Transverse colon (tissue), 4 donors: ENCODE measurements at regions of chr1 and their contacts with region 1.

Region 1: DNA sequence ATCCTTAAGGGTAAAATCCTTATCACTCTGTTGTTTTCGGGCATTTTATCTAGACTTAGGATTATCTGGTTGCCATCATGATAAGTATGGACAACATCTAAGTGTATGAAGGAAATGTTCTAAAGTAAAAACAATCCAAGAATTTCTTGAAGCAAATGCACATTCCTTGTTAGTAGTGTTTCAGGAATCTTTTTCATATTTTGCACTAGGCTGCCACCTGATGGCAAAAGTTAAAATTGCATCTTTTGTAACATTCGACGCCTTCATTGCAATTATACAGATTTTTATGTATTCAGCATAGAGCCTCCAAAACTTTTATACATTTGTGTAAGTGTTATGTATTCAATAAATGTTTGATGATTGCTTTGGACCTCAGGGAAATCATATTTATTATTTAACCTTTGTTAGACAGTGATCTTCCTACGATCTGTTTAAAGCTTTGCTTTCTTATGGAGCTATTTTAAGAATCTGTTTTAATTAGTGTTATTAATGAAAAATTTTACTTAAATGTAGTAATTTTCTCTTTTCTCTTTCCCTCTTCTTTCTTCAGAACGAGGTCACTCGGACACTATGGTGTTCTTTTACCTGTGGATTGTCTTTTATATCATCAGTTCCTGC is 49.4 kb upstream of the KIAA1614 start:
- DNase-seq: peak; percentile 11
- H3K4me3 ChIP-seq: no peak overlapping the region
- H3K27ac ChIP-seq: no peak overlapping the region
- H3K4me1 ChIP-seq: no peaks in the 10 kb centered on the region
- H3K27me3 ChIP-seq: no peaks in the 10 kb centered on the region
- CTCF ChIP-seq: peak; percentile 62 to 78 (median 73)
- EP300 ChIP-seq: no peak
- POLR2A ChIP-seq: no peak

Region 2: GRCh38 chr1:180533266-180533987 is 329.8 kb before region 1 on chr1:
- in situ Hi-C with region 1: loop called in 2 of 4 experiments (anchors 5 to 10 kb)
- intact Hi-C with region 1: loop called (anchors 5 kb)
- DNase-seq: peak; percentile 75
- H3K4me3 ChIP-seq: no peak overlapping the region
- H3K27ac ChIP-seq: no peak overlapping the region
- H3K4me1 ChIP-seq: peaks cover 0 to 3% (median 0%) of the 10 kb centered on the region in 4 donors
- H3K27me3 ChIP-seq: no peaks in the 10 kb centered on the region
- CTCF ChIP-seq: peak; percentile 79 to 89 (median 85)
- EP300 ChIP-seq: no peak
- POLR2A ChIP-seq: no peak

Region 3: DNA sequence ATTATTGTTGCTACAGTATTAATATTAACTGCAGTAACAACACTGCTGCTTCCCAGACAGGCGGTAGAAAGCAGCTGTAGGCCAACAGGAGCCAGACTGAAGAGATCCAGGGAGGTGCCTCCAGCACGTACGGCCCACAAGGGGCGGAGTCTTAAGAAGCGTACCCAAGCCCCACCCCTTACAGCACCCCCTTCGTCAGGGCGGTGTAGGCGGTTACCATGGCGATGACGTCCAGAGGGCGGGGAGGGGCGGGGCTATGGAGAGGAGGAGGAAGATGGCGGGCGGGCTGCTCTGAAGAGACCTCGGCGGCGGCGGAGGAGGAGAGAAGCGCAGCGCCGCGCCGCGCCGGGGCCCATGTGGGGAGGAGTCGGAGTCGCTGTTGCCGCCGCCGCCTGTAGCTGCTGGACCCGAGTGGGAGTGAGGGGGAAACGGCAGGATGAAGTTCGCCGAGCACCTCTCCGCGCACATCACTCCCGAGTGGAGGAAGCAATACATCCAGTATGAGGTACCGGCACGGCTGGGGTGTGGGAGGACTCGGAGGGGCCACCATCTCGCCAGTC is 231.4 kb before region 1 on chr1 and contains the start of gene XPR1:
- in situ Hi-C with region 1: loop called in 3 of 4 experiments (anchors 10 to 25 kb)
- intact Hi-C with region 1: no loop called
- DNase-seq: peak; percentile 99
- H3K4me3 ChIP-seq: peak within 1 kb of the TSS; percentile 65 to 96 (median 76)
- H3K27ac ChIP-seq: peak within 1 kb of the TSS; percentile 91 to 99 (median 96)
- H3K4me1 ChIP-seq: peaks cover 15 to 35% (median 17%) of the 10 kb centered on the region in 4 donors
- H3K27me3 ChIP-seq: no peaks in the 10 kb centered on the region
- CTCF ChIP-seq: peak in 4 of 5 experiments; percentile 30 to 56 (median 42)
- EP300 ChIP-seq: no peak
- POLR2A ChIP-seq: peak; percentile 92
- total RNA-seq, gene XPR1: 7.8 to 119 (median 75.3) TPM

Region 4: DNA sequence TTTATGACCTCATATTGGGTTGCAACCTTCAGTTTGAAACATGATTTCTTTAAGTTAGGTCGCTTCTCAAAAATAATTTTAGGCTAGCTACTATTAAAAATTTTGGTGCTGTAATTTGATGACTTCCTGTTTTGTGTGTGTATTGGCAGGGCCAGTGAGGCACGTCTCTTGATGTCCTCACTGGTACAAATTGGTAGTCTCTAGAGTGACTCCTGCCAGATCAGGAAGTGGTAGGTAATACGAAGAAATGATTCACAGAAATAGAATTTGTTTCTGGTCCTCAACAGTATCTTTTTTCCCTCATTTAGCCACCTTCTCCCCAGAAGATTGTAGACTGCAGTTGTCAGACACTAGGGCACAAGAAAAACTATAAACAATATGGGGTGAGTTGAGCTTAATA is 71.5 kb before region 1 on chr1:
- in situ Hi-C with region 1: no loop called
- intact Hi-C with region 1: no loop called
- DNase-seq: no peak
- H3K4me3 ChIP-seq: no peak overlapping the region
- H3K27ac ChIP-seq: no peak overlapping the region
- H3K4me1 ChIP-seq: no peaks in the 10 kb centered on the region
- H3K27me3 ChIP-seq: no peaks in the 10 kb centered on the region
- CTCF ChIP-seq: no peak
- EP300 ChIP-seq: no peak
- POLR2A ChIP-seq: no peak